ENCODE measurements at regions of chr19 and their contacts with region 1.

Region 1: GRCh38 chr19:17215125-17215971 is at the start of gene USE1:
- DNase-seq: peak; percentile 92
- H3K4me3 Mint-ChIP-seq: peak within 1 kb of the TSS; percentile 84
- H3K27ac Mint-ChIP-seq: peak within 1 kb of the TSS; percentile 96
- H3K4me1 Mint-ChIP-seq: peaks cover 16% of the 10 kb centered on the region
- H3K27me3 Mint-ChIP-seq: no peaks in the 10 kb centered on the region
- total RNA-seq, gene USE1: 24.6 to 28.5 TPM

Region 2: GRCh38 chr19:17035842-17036424 is 179.4 kb before region 1 on chr19:
- CTCF ChIA-PET with region 1: no interaction called
- POLR2A ChIA-PET with region 1: no interaction called
- intact Hi-C with region 1: no loop called
- DNase-seq: no peak
- H3K4me3 Mint-ChIP-seq: no peak overlapping the region
- H3K27ac Mint-ChIP-seq: no peak overlapping the region
- H3K4me1 Mint-ChIP-seq: no peaks in the 10 kb centered on the region
- H3K27me3 Mint-ChIP-seq: peaks cover 6% of the 10 kb centered on the region

Region 3: DNA sequence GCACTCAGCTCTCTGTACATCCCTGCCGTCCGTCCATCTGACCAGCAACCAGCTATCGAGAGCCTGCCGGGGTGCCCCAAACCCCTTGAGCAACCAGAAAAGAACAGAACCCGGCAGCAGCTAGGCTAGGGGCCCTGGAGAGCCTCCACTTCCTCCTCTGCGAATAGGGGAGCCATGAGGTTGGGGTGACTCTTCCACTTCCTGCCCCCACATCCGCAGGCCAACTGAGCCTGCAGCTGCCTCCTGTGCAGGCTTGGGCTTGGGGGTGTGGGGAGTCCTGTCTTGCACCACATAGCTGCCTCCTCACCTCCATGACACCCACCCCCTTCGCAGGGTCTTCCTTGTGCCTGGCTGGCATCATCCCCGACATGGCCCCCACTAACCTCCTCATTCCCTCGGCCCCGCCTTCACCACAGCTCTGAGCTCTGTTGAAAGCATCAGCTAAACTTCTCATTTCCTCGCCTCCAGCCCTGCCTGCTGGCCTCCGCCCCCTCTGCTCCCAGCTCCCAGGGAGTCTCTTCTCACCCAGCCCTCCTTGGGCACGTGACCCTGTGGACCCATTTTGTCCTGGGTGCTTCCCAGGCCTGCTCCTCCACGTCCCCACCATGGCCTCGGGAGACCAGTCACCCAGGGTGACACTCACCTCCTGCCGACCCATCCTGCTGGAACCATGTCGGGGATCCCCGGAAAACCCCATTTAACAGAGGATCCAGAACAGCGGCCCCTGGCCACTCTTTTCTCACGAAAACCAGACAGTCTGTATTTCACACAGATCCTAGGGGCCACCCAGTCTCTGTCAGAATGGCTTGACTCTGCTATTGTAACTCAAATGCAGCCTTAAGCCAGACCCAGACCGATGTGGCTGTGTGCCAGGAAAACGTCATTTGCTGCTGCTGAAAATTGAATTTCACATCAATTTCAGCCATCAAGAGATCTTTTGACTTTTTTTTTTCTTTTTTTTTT is 89.4 kb before region 1 on chr19:
- CTCF ChIA-PET with region 1: interaction called, 3 read pairs
- POLR2A ChIA-PET with region 1: no interaction called
- intact Hi-C with region 1: loop called (anchors 5 kb)
- DNase-seq: peak; percentile 82
- H3K4me3 Mint-ChIP-seq: peak overlapping the region; percentile 65
- H3K27ac Mint-ChIP-seq: peak overlapping the region; percentile 92
- H3K4me1 Mint-ChIP-seq: peaks cover 42% of the 10 kb centered on the region
- H3K27me3 Mint-ChIP-seq: no peaks in the 10 kb centered on the region

Region 4: GRCh38 chr19:17183858-17184321 is 31.5 kb before region 1 on chr19:
- CTCF ChIA-PET with region 1: no interaction called
- POLR2A ChIA-PET with region 1: no interaction called
- intact Hi-C with region 1: loop called (anchors 1 kb)
- DNase-seq: peak; percentile 32
- H3K4me3 Mint-ChIP-seq: peak overlapping the region; percentile 70
- H3K27ac Mint-ChIP-seq: peak overlapping the region; percentile 89
- H3K4me1 Mint-ChIP-seq: peaks cover 19% of the 10 kb centered on the region
- H3K27me3 Mint-ChIP-seq: no peaks in the 10 kb centered on the region

Region 5: GRCh38 chr19:17226002-17226933 is 10.9 kb after region 1 on chr19 and contains the start of gene OCEL1:
- CTCF ChIA-PET with region 1: no interaction called
- POLR2A ChIA-PET with region 1: interaction called, 25 read pairs
- intact Hi-C with region 1: loop called (anchors 1 kb)
- DNase-seq: peak; percentile 98
- H3K4me3 Mint-ChIP-seq: peak within 1 kb of the TSS; percentile 91
- H3K27ac Mint-ChIP-seq: peak within 1 kb of the TSS; percentile 97
- H3K4me1 Mint-ChIP-seq: peaks cover 6% of the 10 kb centered on the region
- H3K27me3 Mint-ChIP-seq: no peaks in the 10 kb centered on the region
- total RNA-seq, gene OCEL1: 17.6 to 17.9 TPM

Region 6: DNA sequence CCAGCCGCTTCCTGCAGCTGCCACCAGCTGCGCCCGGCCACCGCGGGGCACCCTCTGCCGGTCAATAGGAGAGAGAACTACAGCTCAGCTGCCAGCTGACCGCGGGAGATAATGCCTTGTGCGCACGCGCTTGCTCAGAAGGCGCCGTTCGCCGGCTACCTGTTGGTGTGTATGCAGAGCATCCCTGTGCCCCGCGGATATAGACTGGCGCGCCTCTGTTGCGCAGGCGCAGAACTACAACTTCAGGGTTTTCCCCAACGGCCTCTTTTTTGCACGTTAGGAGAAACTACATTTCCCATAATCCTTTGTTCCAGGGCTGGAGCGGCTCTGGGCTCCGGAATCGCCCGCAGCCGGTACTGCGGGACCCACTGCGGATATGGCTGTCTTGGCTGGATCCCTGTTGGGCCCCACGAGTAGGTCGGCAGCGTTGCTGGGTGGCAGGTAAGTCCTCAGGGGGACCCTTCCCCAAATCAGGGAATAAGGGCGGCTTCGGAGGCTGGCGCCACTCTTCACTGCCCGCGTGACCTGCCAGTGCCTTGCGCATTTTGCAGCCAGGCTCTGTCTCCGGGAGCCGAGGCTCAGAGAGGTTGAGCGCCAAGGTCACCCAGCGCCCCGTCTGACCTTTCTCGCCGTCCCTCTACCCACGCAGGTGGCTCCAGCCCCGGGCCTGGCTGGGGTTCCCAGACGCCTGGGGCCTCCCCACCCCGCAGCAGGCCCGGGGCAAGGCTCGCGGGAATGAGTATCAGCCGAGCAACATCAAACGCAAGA is 90.4 kb after region 1 on chr19 and contains the start of gene MRPL34:
- CTCF ChIA-PET with region 1: no interaction called
- POLR2A ChIA-PET with region 1: no interaction called
- intact Hi-C with region 1: no loop called
- DNase-seq: peak; percentile 99
- H3K4me3 Mint-ChIP-seq: peak within 1 kb of the TSS; percentile 89
- H3K27ac Mint-ChIP-seq: peak within 1 kb of the TSS; percentile 89
- H3K4me1 Mint-ChIP-seq: peaks cover 54% of the 10 kb centered on the region
- H3K27me3 Mint-ChIP-seq: no peaks in the 10 kb centered on the region
- total RNA-seq, gene MRPL34: 92.9 to 93.7 TPM

Region 7: GRCh38 chr19:17488593-17489391 is 273.4 kb after region 1 on chr19:
- CTCF ChIA-PET with region 1: no interaction called
- POLR2A ChIA-PET with region 1: no interaction called
- intact Hi-C with region 1: no loop called
- DNase-seq: peak; percentile 90
- H3K4me3 Mint-ChIP-seq: peak overlapping the region; percentile 64
- H3K27ac Mint-ChIP-seq: peak overlapping the region; percentile 28
- H3K4me1 Mint-ChIP-seq: peaks cover 28% of the 10 kb centered on the region
- H3K27me3 Mint-ChIP-seq: no peaks in the 10 kb centered on the region

Region 8: GRCh38 chr19:17511724-17512573 is 296.6 kb after region 1 on chr19:
- CTCF ChIA-PET with region 1: no interaction called
- POLR2A ChIA-PET with region 1: no interaction called
- intact Hi-C with region 1: no loop called
- DNase-seq: peak; percentile 90
- H3K4me3 Mint-ChIP-seq: peak overlapping the region; percentile 96
- H3K27ac Mint-ChIP-seq: peak overlapping the region; percentile 80
- H3K4me1 Mint-ChIP-seq: peaks cover 38% of the 10 kb centered on the region
- H3K27me3 Mint-ChIP-seq: no peaks in the 10 kb centered on the region

Measured in activated CD4-positive, alpha-beta memory T cell treated with anti-CD3 and anti-CD28 coated beads for 36 hours (primary cell).